ENCODE measurements at regions of chr19 and their contacts with region 1.

Region 1: DNA sequence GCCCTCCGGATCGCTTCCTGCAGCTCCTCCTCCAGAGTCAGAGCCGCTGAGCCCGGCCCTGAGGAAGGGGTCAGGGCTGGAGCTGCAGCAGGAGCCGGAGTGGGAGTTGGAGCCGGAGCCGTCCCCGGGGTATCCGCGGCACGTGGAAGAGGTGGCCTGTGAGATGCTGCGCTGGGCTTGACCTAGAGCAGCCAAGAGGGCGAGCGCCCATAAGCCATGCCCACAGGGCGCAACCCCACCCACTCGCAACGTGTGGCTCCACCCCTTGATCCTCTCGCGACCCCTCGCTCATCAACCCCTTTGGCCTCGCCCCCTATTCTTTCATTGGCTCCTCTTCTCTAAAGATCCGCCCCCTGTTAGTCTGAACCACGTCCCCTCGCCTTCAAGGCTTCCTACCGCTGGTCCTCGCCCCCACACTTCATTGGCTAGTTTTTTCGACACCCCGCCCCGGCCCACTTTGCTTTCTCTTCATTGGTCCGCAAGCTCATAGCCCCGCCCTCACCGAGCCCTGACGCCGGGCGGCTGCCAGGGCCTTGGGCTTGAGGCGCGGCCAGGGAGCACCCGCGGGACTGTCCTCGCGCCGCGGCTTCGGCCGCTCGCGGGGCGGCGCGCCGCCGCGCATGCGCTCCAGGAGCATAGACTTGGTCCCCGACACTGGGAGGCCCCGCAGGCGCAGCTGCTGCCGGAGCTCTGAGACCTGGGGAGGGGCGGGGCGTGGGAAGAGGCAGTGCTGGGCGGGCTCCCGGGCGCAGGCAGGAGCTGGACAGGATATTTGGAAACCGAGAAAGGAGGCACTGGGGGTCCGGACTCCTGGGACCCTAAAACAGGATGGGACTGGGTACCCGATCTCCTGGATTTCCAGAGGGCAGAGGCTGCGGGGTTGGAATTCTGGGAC is 5.4 kb downstream of the MAMSTR start:
- DNase-seq: peak; percentile 99
- ATAC-seq: peak; percentile 90
- H3K4me3 ChIP-seq: peak overlapping the region; percentile 88 to 92
- H3K27ac ChIP-seq: peak overlapping the region; percentile 77
- H3K4me1 ChIP-seq: peaks cover 12 to 35% of the 10 kb centered on the region in 2 experiments
- H3K27me3 ChIP-seq: no peaks in the 10 kb centered on the region
- CTCF ChIP-seq: no peak
- POLR2A ChIP-seq: peak; percentile 64
- RAD21 ChIP-seq: no peak

Region 2: DNA sequence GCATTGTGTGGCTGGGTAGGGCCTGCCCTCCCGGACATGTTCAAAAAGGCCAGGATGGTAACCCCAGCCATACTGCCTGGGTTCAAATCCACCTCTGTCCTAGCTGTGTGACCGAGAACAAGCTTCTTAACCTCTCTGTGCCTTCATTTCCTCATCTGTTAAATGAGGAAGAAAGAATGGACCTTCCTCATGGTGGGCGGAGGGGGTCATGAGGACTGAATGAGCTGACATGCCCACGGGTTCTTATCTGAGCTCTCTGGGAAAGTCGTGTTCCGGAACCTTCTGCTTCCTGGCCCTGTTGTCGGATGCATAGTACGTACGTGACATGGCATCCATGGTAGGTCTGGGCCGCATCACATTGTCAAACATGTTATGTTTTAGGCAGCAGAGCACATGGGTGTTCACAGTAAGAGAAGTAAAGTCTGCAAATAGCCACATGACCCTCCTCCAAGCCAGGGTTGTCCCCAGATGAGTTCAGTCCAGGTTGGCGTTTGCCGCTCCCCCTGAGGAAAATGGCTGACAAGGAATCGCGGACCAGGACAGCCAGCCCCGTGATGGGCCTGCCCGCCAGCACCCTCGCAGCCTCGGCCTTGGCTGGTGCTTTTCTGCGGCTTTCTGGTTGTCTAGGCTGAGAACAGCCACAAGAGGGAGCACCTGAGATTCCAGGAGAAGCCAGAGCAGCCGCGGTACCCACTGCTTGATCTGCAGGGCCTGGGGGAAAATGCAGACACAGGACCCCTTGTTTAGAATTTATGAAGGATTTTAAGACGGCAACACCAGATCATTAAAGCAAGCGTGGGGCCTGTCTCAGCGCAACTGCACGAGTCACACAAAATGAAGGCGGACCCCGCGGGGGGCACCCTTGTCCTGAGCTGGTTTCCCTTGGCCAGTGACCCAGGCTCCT is 38.9 kb before region 1 on chr19:
- CTCF ChIA-PET with region 1: interaction called, 6 read pairs
- POLR2A ChIA-PET with region 1: no interaction called
- RAD21 ChIA-PET with region 1: interaction called in 1 of 2 experiments, 3 read pairs
- intact Hi-C with region 1: loop called (anchors 1 kb)
- DNase-seq: peak; percentile 76
- ATAC-seq: peak; percentile 90
- H3K4me3 ChIP-seq: no peak overlapping the region
- H3K27ac ChIP-seq: peak overlapping the region; percentile 9; the same call in 1 of the 2 replicates
- H3K4me1 ChIP-seq: peaks cover 13 to 25% of the 10 kb centered on the region in 2 experiments
- H3K27me3 ChIP-seq: no peaks in the 10 kb centered on the region
- CTCF ChIP-seq: peak; percentile 85 to 90 (median 89)
- POLR2A ChIP-seq: no peak
- RAD21 ChIP-seq: peak; percentile 91

Region 3: GRCh38 chr19:48696353-48697010 is 17.6 kb before region 1 on chr19:
- CTCF ChIA-PET with region 1: interaction called, 4 read pairs
- POLR2A ChIA-PET with region 1: interaction called, 15 read pairs
- RAD21 ChIA-PET with region 1: interaction called, 4 to 5 read pairs
- intact Hi-C with region 1: no loop called
- DNase-seq: no peak
- ATAC-seq: peak; percentile 52
- H3K4me3 ChIP-seq: peak overlapping the region; percentile 75 to 85
- H3K27ac ChIP-seq: peak overlapping the region; percentile 83
- H3K4me1 ChIP-seq: peaks cover 32 to 55% of the 10 kb centered on the region in 2 experiments
- H3K27me3 ChIP-seq: no peaks in the 10 kb centered on the region
- CTCF ChIP-seq: no peak
- POLR2A ChIP-seq: peak; percentile 2
- RAD21 ChIP-seq: no peak

Region 4: GRCh38 chr19:48724796-48725753 is 11.0 kb after region 1 on chr19:
- CTCF ChIA-PET with region 1: interaction called, 5 read pairs
- POLR2A ChIA-PET with region 1: interaction called, 18 read pairs
- RAD21 ChIA-PET with region 1: no interaction called
- intact Hi-C with region 1: no loop called
- DNase-seq: peak; percentile 72
- ATAC-seq: peak; percentile 48
- H3K4me3 ChIP-seq: peak overlapping the region in 1 of 2 experiments; percentile 2; a peak in 2 of 4 replicates
- H3K27ac ChIP-seq: peak overlapping the region; percentile 58
- H3K4me1 ChIP-seq: peaks cover 6 to 32% of the 10 kb centered on the region in 2 experiments
- H3K27me3 ChIP-seq: no peaks in the 10 kb centered on the region
- CTCF ChIP-seq: no peak
- POLR2A ChIP-seq: peak; percentile 0
- RAD21 ChIP-seq: no peak

Region 5: DNA sequence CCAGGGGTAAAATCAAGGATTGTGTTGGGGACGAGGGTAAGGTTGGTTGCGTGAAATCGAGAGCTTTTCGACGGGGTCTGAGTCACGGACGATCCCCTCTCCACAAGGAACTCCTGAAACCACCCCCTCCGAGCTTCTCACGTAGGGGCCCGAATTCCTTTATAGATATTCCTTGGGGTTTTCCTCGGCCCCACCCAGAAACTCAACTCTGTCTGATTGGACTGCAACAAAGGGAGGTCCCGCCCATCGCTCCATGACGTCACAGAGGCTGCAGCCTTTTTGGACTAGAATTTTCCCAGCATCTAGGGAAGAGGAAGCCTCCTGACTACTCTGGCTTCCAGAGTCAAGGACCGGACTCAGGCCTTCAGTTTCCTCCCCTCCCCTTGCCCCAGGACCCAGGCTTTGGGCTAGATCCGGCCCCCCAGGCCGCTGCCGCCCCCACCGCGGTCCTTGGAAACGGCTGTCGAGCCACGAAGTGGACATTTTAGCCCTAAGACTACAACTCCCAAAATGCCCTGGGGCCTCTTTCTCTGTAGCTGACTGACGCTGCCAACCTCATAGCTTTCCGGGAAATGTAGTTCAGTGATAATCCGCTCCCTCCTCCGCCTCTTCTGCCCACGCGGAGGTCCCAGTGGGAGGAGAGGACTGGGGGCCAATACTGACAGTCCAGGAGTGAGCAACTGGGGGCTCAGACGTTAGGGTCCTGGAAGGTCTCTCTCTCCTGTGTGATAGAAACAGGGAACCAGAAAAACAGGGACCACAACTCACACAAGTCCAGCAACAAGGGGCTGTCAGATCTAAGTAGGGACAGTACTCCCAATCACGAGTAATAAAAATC is 32.8 kb after region 1 on chr19 and contains the start of gene IZUMO1:
- CTCF ChIA-PET with region 1: no interaction called
- POLR2A ChIA-PET with region 1: no interaction called
- RAD21 ChIA-PET with region 1: no interaction called
- intact Hi-C with region 1: loop called (anchors 5 kb)
- DNase-seq: peak; percentile 59
- ATAC-seq: peak; percentile 76
- H3K4me3 ChIP-seq: peak within 1 kb of the TSS; percentile 31 to 48
- H3K27ac ChIP-seq: peak within 1 kb of the TSS; percentile 36
- H3K4me1 ChIP-seq: peaks cover 0 to 20% of the 10 kb centered on the region in 2 experiments; a peak in 2 of 4 replicates
- H3K27me3 ChIP-seq: no peaks in the 10 kb centered on the region
- CTCF ChIP-seq: no peak
- POLR2A ChIP-seq: no peak
- RAD21 ChIP-seq: no peak
- total RNA-seq, gene IZUMO1: 1.7 TPM

Region 6: DNA sequence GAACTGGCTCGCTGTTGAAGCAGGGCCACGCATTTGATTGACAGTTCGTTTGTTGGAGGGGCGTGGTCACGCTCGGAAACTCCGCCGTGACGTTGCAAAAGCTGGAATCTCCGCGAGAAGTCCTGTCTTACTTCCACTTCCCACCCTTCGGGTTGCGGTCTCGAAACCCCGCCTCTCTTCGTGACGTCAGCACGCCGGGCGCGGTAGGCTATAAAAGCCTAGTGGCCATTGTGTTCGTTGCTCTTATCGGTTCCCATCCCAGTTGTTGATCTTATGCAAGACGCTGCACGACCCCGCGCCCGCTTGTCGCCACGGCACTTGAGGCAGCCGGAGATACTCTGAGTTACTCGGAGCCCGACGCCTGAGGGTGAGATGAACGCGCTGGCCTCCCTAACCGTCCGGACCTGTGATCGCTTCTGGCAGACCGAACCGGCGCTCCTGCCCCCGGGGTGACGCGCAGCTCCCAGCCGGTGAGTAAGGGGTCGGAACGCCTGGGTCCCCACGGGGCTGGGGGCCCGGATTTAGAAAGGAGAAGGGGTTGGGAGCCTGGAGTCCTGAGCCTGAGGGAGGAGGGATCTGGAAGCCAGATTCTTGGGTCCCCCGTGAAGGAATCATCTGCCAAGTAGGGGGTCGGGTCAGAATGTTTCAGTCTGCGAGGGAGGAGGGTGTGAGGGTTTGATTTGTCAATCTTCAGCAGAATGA is 158.2 kb after region 1 on chr19 and contains the start of gene PPP1R15A:
- CTCF ChIA-PET with region 1: no interaction called
- POLR2A ChIA-PET with region 1: no interaction called
- RAD21 ChIA-PET with region 1: no interaction called
- intact Hi-C with region 1: no loop called
- DNase-seq: peak; percentile 96
- ATAC-seq: peak; percentile 73
- H3K4me3 ChIP-seq: peak within 1 kb of the TSS; percentile 93 to 100
- H3K27ac ChIP-seq: peak within 1 kb of the TSS; percentile 90
- H3K4me1 ChIP-seq: peaks cover 57 to 70% of the 10 kb centered on the region in 2 experiments
- H3K27me3 ChIP-seq: no peaks in the 10 kb centered on the region
- CTCF ChIP-seq: no peak
- POLR2A ChIP-seq: peak; percentile 99
- RAD21 ChIP-seq: no peak
- total RNA-seq, gene PPP1R15A: 50.3 TPM